H1 (cell line): ENCODE measurements at regions of chr1 and their contacts with region 1.

Region 1: GRCh38 chr1:66242646-66243547 is 291.1 kb upstream of the SGIP1 start:
- DNase-seq: peak; percentile 60 to 80
- H3K4me3 ChIP-seq: no peak overlapping the region
- H3K27ac ChIP-seq: no peak overlapping the region
- H3K4me1 ChIP-seq: no peaks in the 10 kb centered on the region
- H3K27me3 ChIP-seq: no peaks in the 10 kb centered on the region
- CTCF ChIP-seq: peak; percentile 97 to 99 (median 98)
- EP300 ChIP-seq: no peak
- POLR2A ChIP-seq: no peak
- RAD21 ChIP-seq: peak; percentile 98 to 100

Region 2: DNA sequence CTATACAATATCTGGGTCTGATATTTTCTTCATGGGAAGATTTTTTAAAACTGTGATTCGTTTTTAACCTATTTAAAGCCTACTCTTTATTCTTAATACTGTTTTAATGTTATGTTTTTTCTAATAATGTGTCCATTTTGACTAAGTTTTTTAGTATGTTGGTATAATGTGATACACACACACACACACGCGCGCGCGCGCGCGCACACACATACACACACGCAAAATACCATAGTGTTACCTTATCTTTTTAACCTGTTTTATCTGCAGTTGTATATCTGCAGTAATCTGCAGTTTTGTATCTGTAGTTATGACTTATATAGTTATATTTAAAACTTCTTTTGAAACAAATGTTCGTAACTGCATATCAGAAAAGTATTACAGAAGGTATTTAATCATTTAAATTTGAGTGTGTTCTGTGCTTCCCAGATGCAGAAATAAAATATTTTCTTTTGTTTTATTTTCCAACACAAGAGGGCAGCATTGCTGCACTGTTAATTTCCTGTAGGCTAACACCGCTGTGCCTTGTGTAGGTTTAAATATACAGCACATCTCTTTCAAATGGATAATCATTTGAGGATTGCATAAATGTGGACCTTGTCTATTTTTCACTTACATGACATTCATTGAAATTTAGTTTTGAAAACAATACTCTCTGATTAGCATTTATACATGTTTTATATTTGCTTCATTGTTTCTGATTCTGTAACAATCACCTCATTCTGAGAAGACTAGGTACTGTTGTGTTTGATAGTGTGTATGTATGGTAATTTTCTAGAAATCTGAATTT is 284.1 kb before region 1 on chr1:
- CTCF ChIA-PET with region 1: interaction called, 204 read pairs
- POLR2A ChIA-PET with region 1: no interaction called
- DNase-seq: no peak
- H3K4me3 ChIP-seq: no peak overlapping the region
- H3K27ac ChIP-seq: no peak overlapping the region
- H3K4me1 ChIP-seq: no peaks in the 10 kb centered on the region
- H3K27me3 ChIP-seq: no peaks in the 10 kb centered on the region
- CTCF ChIP-seq: peak in 2 of 3 experiments; percentile 47 to 69; a peak in 3 of 4 replicates
- EP300 ChIP-seq: no peak
- POLR2A ChIP-seq: no peak
- RAD21 ChIP-seq: peak; percentile 90 to 92

Region 3: GRCh38 chr1:66084442-66084841 is 158.5 kb before region 1 on chr1:
- CTCF ChIA-PET with region 1: interaction called, 17 read pairs
- POLR2A ChIA-PET with region 1: no interaction called
- DNase-seq: no peak
- H3K4me3 ChIP-seq: no peak overlapping the region
- H3K27ac ChIP-seq: no peak overlapping the region
- H3K4me1 ChIP-seq: no peaks in the 10 kb centered on the region
- H3K27me3 ChIP-seq: no peaks in the 10 kb centered on the region
- CTCF ChIP-seq: peak in 2 of 3 experiments; percentile 4 to 47; a peak in 1 of 4 replicates
- EP300 ChIP-seq: no peak
- POLR2A ChIP-seq: no peak
- RAD21 ChIP-seq: peak; percentile 16 to 30; a peak in 1 of 4 replicates

Region 4: DNA sequence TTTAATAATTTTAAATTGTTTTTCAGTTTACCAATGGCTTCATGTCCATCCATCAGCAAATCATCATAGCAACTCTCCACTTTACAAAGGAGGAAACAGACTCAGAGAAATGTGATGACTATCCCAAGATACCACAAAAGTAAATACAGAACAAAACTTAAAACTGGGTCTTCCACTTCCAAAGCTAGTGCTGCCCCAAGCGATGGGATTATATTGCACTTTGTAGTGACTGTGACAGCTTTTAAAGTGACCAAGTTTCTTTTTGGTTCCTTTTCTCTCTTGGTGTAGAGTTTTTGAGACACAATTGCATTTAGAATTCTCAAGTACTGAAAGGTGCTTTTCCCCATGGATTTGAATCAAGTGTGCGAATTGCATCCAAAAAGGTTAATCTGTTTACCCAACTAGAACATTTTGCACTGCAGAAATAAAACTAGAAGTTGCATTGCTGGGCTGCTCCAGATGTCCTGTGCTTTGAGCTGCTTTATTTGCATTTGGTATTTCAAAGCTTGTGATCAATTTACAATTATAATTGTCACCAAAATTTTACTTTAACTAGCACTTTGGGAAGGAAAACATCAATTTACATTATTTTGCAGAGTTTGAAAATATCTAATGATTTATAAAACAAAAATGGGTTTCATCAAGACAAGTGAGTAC is 130.0 kb before region 1 on chr1:
- CTCF ChIA-PET with region 1: interaction called, 13 read pairs
- POLR2A ChIA-PET with region 1: no interaction called
- DNase-seq: no peak
- H3K4me3 ChIP-seq: no peak overlapping the region
- H3K27ac ChIP-seq: no peak overlapping the region
- H3K4me1 ChIP-seq: no peaks in the 10 kb centered on the region
- H3K27me3 ChIP-seq: no peaks in the 10 kb centered on the region
- CTCF ChIP-seq: no peak
- EP300 ChIP-seq: no peak
- POLR2A ChIP-seq: no peak
- RAD21 ChIP-seq: no peak

Region 5: DNA sequence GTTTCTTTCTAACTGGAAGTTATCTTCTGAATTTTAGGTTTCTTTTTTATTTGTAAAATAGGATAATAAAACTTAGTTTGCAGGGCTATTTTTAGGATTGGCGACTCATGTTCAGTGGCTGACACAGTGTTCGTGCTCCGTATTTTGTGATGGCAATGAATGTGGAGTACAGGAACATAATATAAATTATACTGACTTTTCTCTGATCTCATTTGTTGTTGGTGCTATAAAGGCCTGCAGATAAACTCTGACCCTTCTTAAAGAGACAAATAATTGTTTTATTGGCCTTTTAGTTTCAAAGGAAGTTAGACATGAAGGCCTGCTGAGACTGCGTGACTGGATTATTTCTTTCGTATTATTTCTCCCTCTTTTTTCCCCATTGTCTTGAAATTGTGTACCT is 110.6 kb before region 1 on chr1:
- CTCF ChIA-PET with region 1: no interaction called
- POLR2A ChIA-PET with region 1: no interaction called
- DNase-seq: no peak
- H3K4me3 ChIP-seq: no peak overlapping the region
- H3K27ac ChIP-seq: no peak overlapping the region
- H3K4me1 ChIP-seq: no peaks in the 10 kb centered on the region
- H3K27me3 ChIP-seq: no peaks in the 10 kb centered on the region
- CTCF ChIP-seq: no peak
- EP300 ChIP-seq: no peak
- POLR2A ChIP-seq: no peak
- RAD21 ChIP-seq: no peak

Region 6: GRCh38 chr1:66231217-66231616 is 11.7 kb before region 1 on chr1:
- CTCF ChIA-PET with region 1: interaction called, 80 read pairs
- POLR2A ChIA-PET with region 1: no interaction called
- DNase-seq: no peak
- H3K4me3 ChIP-seq: no peak overlapping the region
- H3K27ac ChIP-seq: no peak overlapping the region
- H3K4me1 ChIP-seq: 0 out of 7 replicates have a peak, but pooled peaks cover 0 to 2% (median 0%) of the 10 kb centered on the region in 4 experiments
- H3K27me3 ChIP-seq: no peaks in the 10 kb centered on the region
- CTCF ChIP-seq: no peak
- EP300 ChIP-seq: no peak
- POLR2A ChIP-seq: no peak
- RAD21 ChIP-seq: no peak

Region 7: DNA sequence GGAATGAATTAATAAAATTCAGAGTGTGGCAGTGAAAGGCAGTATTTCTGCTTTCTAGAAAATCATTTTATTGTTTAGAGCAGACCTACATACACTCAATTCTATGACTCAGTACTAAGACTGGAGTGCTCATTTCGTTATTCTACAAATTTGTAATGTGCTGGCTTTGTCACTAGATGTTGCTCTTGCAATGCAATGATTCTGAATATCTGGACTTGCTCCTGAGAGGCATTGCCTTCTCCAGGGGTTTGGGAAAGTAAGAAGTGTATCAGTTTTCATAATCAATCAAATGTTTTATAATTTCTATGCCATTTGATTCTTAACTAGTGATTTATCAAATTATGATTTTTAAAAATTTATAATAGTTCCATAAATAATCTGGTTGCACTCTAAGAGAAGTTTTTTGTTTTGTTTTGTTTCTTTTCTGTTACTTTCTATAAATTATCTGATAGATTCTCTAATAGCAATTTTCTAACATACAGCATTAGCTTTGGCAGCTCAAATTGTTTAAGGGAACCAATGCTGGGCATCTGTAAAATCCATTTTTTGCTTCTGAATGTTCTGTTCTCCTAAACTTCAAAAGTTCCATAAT is 10.5 kb after region 1 on chr1:
- CTCF ChIA-PET with region 1: interaction called, 57 read pairs
- POLR2A ChIA-PET with region 1: no interaction called
- DNase-seq: no peak
- H3K4me3 ChIP-seq: no peak overlapping the region
- H3K27ac ChIP-seq: no peak overlapping the region
- H3K4me1 ChIP-seq: no peaks in the 10 kb centered on the region; a peak in 1 of 7 replicates
- H3K27me3 ChIP-seq: no peaks in the 10 kb centered on the region
- CTCF ChIP-seq: peak in 2 of 3 experiments; percentile 69; a peak in 3 of 4 replicates
- EP300 ChIP-seq: no peak
- POLR2A ChIP-seq: no peak
- RAD21 ChIP-seq: peak; percentile 96 to 98

Region 8: DNA sequence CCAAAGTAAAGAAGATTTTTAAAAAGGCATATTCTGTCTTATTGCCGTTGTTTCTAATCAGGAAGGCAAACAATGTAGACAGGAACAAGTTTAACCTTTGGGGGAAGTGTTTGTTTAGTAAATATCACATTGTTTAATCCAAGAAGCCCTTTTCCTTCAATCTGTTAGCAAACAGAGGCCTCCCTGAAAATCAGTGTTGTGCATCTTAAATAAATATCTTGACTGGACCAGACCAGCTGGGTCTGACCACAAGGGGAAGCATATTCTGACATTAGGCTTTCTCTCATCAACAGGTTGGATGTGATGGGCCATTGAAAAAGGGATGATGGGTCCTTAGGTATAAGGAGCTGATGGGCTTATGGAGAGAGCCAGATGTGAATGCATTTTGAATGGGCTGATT is 209.3 kb after region 1 on chr1:
- CTCF ChIA-PET with region 1: interaction called, 273 read pairs
- POLR2A ChIA-PET with region 1: no interaction called
- DNase-seq: no peak
- H3K4me3 ChIP-seq: no peak overlapping the region
- H3K27ac ChIP-seq: no peak overlapping the region
- H3K4me1 ChIP-seq: no peaks in the 10 kb centered on the region
- H3K27me3 ChIP-seq: no peaks in the 10 kb centered on the region
- CTCF ChIP-seq: no peak
- EP300 ChIP-seq: no peak
- POLR2A ChIP-seq: no peak
- RAD21 ChIP-seq: peak; percentile 2 to 15; a peak in 2 of 4 replicates